Thyroid gland (tissue), 4 donors: ENCODE measurements at regions of chr18 and their contacts with region 1.

Region 1: GRCh38 chr18:4004183-4004829 is 450.8 kb downstream of the DLGAP1 start:
- DNase-seq: no peak
- H3K4me3 ChIP-seq: no peak overlapping the region
- H3K27ac ChIP-seq: no peak overlapping the region
- H3K4me1 ChIP-seq: no peaks in the 10 kb centered on the region
- H3K27me3 ChIP-seq: no peaks in the 10 kb centered on the region
- CTCF ChIP-seq: no peak
- POLR2A ChIP-seq: no peak

Region 2: GRCh38 chr18:3771121-3771971 is 233.0 kb before region 1 on chr18:
- intact Hi-C with region 1: loop called (anchors 5 kb)
- DNase-seq: peak; percentile 85
- H3K4me3 ChIP-seq: peak overlapping the region in 2 of 3 donors; percentile 10 to 19
- H3K27ac ChIP-seq: no peak overlapping the region
- H3K4me1 ChIP-seq: peaks cover 0 to 4% of the 10 kb centered on the region in 2 donors
- H3K27me3 ChIP-seq: no peaks in the 10 kb centered on the region
- CTCF ChIP-seq: peak; percentile 77 to 97 (median 96)
- POLR2A ChIP-seq: no peak